HepG2 (cell line): ENCODE measurements at regions of chr6 and their contacts with region 1.

Region 1: DNA sequence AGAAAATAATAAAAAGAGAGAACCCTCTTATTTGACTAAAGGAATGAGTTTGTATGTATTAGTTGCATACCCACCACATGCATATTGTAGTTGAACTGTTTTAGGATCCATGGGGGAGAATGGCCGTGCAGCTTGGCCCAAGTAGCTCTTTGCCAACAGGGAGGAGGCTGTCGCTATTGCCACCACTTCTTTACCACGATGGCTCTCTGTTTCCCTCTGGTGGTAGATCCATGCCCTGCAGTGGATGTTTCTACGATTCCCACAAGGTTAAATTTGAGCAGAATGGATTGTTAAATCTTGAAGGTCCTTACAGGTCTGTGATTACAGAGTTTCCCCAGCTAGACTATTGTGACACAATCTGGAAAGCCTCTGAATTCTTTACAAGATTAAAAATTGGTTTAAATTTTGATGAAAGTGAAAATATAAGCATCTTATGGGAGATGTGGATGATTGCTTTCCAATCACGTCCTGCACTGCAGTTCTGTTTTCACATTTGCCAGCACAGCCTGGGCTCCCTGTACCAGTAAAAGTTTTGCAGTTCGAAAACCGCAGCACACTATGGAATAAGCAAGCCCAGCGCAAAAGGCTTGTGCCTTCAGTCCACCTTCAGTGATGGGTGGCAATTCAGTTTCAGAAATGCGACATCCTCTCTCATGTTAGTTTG is 34.4 kb upstream of the FNDC1 start:
- DNase-seq: peak; percentile 48
- ATAC-seq: peak; percentile 82
- H3K4me3 ChIP-seq: no peak overlapping the region
- H3K27ac ChIP-seq: no peak overlapping the region
- H3K4me1 ChIP-seq: no peaks in the 10 kb centered on the region
- H3K27me3 ChIP-seq: peaks cover 4 to 59% of the 10 kb centered on the region in 2 experiments; a peak in 4 of 5 replicates
- CTCF ChIP-seq: peak; percentile 90
- EP300 ChIP-seq: no peak
- POLR2A ChIP-seq: no peak
- RAD21 ChIP-seq: peak; percentile 53; the same call in 1 of the 2 replicates

Region 2: GRCh38 chr6:159008656-159009288 is 126.1 kb before region 1 on chr6:
- CTCF ChIA-PET with region 1: interaction called, 9 read pairs
- POLR2A ChIA-PET with region 1: no interaction called
- in situ Hi-C with region 1: no loop called
- intact Hi-C with region 1: loop called (anchors 1 kb)
- DNase-seq: peak; percentile 25
- ATAC-seq: peak; percentile 54
- H3K4me3 ChIP-seq: no peak overlapping the region
- H3K27ac ChIP-seq: no peak overlapping the region
- H3K4me1 ChIP-seq: peaks cover 2% of the 10 kb centered on the region
- H3K27me3 ChIP-seq: no peaks in the 10 kb centered on the region
- CTCF ChIP-seq: peak; percentile 55
- EP300 ChIP-seq: no peak
- POLR2A ChIP-seq: no peak
- RAD21 ChIP-seq: 0 out of 2 replicates have a peak, but pooled peaks have one; percentile 23

Region 3: GRCh38 chr6:159042003-159042825 is 92.6 kb before region 1 on chr6:
- CTCF ChIA-PET with region 1: interaction called, 16 read pairs
- POLR2A ChIA-PET with region 1: no interaction called
- in situ Hi-C with region 1: no loop called
- intact Hi-C with region 1: loop called (anchors 1 kb)
- DNase-seq: peak; percentile 70
- ATAC-seq: peak; percentile 95
- H3K4me3 ChIP-seq: no peak overlapping the region
- H3K27ac ChIP-seq: no peak overlapping the region
- H3K4me1 ChIP-seq: no peaks in the 10 kb centered on the region
- H3K27me3 ChIP-seq: peaks cover 10 to 71% of the 10 kb centered on the region in 2 experiments; a peak in 4 of 5 replicates
- CTCF ChIP-seq: peak; percentile 92
- EP300 ChIP-seq: no peak
- POLR2A ChIP-seq: no peak
- RAD21 ChIP-seq: peak; percentile 69; the same call in 1 of the 2 replicates

Region 4: GRCh38 chr6:159098636-159099106 is 36.2 kb before region 1 on chr6:
- CTCF ChIA-PET with region 1: no interaction called
- POLR2A ChIA-PET with region 1: no interaction called
- in situ Hi-C with region 1: no loop called
- intact Hi-C with region 1: no loop called
- DNase-seq: no peak
- ATAC-seq: no peak
- H3K4me3 ChIP-seq: no peak overlapping the region
- H3K27ac ChIP-seq: no peak overlapping the region
- H3K4me1 ChIP-seq: peaks cover 8% of the 10 kb centered on the region; the same call in 1 of the 2 replicates
- H3K27me3 ChIP-seq: peaks cover 2 to 26% of the 10 kb centered on the region in 2 experiments; a peak in 4 of 5 replicates
- CTCF ChIP-seq: no peak
- EP300 ChIP-seq: no peak
- POLR2A ChIP-seq: no peak
- RAD21 ChIP-seq: no peak